OCI-LY7 (cell line): ENCODE measurements at regions of chrX and their contacts with region 1.

Region 1: GRCh38 chrX:65674204-65674893 is 6.9 kb downstream of the MSN start:
- DNase-seq: no peak
- H3K4me3 ChIP-seq: no peak overlapping the region
- H3K27ac ChIP-seq: no peak overlapping the region
- H3K4me1 ChIP-seq: peaks cover 62% of the 10 kb centered on the region
- CTCF ChIP-seq: no peak

Region 2: DNA sequence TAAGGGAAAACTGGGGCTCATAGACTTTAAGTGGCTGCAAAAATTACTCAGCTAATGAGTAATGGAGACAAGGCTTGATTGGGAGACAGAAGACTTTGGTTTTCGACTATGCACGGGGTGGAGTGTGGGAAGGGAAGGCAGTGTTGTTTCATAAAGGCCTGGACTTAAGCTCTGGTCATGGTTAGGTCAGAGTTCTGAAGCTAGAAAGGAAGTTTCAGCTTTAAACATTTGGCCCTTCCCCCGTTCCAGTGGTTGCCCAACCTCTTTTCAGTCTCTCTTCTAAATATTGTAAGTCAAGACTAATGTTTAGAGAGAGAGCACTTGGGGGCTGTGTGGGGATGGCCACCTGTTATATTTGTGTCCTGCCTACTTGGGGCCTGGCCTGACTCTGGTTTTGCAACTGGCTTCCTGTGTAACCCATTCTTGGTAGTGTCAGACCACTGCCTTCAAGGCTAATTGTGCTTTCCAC is 14.1 kb after region 1 on chrX:
- CTCF ChIA-PET with region 1: interaction called, 4 read pairs
- POLR2A ChIA-PET with region 1: interaction called, 23 read pairs
- intact Hi-C with region 1: no loop called
- DNase-seq: peak; percentile 70
- H3K4me3 ChIP-seq: peak overlapping the region; percentile 26
- H3K27ac ChIP-seq: peak overlapping the region; percentile 71
- H3K4me1 ChIP-seq: peaks cover 91% of the 10 kb centered on the region
- CTCF ChIP-seq: no peak

Region 3: GRCh38 chrX:65697915-65698796 is 23.8 kb after region 1 on chrX:
- CTCF ChIA-PET with region 1: interaction called, 4 read pairs
- POLR2A ChIA-PET with region 1: interaction called, 15 read pairs
- intact Hi-C with region 1: no loop called
- DNase-seq: peak; percentile 87
- H3K4me3 ChIP-seq: peak overlapping the region; percentile 58
- H3K27ac ChIP-seq: peak overlapping the region; percentile 100
- H3K4me1 ChIP-seq: peaks cover 90% of the 10 kb centered on the region
- CTCF ChIP-seq: no peak